ENCODE measurements at regions of chr16 and their contacts with region 1.

Region 1: DNA sequence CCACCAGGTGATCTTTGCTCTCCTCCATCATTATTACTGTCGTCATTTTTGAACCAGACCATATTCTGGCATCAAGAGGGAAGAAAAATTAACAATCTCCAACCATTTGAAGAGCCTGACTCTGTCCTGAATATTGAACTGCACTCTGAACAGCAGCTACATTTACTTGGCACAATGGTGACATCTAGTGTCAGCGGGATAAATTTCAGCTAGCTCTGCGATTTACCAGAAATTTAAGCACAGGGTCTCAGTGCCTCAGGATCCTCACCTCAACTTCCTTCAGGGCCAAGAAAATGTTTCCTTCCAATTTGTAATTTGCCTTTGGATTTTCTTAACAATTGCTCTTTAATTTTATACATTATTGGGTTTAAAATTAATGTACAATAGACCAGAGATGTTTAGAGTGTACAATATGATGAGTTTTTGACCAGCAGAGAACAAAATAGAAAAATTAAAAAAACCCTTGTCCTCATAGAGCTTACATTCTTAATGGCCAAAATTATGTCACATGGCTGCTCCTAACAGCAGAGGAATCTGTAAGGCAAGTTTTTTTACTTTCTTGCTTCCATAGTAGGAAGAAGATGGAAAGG is 10.7 kb upstream of the ZNF19 start:
- DNase-seq: no peak
- H3K4me3 ChIP-seq: no peak overlapping the region
- CTCF ChIP-seq: peak; percentile 63

Region 2: DNA sequence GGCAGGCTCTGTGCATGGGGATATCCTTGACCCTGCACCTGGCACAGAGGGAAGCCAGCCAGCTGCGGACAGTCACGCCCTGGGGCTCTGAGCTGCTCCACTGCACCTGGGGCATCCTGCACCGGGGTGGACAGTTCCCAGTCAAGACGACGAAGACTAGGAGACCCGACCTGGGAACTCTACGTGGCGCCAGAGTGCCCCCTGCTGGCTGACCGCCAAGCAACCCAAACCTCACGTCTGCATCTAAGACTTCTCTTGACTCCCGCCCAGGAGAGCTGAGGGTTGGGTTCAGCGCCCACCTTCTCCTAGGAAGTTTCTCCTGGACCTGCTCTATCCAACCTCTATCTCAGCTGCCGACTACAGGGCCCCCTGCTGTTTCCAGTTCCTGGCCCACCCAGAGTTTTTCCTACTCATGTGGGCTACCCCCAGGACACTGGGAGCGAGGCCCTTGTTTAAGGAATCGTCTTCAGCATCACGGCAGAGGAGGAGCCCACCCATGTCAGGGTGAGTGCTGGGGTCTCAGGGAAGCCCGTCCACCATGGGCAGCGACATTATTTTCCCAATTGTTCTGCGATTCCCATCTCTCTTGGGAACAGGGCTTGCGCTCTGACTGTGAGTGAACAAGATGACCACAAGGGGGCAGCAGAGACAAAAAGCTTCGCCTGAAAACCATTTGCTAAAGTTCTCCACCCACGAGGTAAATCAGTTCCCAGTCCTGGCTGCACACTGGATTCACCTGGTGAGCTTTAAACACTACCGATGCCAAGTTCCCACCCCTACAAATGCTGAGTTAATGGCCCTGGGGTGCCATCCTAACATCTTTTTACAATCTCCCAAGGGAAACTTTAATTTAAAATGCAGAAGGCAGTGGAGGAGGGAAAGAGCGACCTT is 87.4 kb before region 1 on chr16:
- CTCF ChIA-PET with region 1: interaction called, 353 read pairs
- POLR2A ChIA-PET with region 1: no interaction called
- DNase-seq: no peak
- H3K4me3 ChIP-seq: no peak overlapping the region
- CTCF ChIP-seq: peak; percentile 81

Region 3: DNA sequence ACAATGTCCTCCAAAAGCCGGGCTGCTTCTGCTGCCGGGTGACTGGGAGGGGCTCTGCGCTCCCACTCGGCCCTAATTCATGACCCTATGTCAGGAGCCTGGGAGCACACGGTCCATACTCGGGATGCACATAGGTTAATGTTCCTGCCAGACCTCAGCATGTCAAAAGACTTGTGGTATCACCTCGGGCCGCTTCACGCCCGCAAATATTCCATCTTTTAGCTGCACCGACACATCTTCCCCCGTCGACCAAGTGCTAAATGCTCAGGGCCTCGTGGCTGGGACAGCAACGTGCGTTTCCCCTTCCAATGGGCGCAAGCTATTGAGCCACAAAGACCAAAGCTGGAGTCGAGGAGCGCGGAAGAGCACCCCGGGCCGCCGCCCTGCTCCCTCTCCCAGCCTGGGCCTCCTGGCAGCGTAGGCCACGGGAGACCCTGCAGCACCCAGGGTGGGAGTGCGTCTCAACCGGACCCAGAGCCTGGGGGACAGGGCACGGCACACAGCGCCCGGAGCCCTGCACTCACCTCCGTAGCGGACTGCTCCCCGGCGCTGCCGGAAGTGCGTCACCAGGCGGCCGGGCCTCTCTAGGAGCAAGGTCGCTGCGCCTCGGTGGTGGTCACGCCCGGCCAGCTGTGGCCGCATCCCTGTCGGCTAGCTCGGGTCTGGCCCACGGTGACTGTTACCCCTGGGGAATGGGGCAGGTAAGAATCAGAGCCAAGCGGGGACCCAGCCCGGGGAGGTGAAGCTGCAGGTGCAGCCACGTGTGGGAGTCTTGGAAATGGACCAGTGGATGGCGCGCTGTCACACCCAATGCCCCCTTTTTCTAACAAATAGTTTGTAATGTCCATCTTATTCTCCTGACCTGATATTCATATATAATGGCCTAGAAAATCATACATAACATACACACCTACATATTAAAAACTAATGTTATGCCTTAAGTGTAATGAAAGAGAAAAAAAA is 37.9 kb before region 1 on chr16 and contains the start of gene ZNF23:
- CTCF ChIA-PET with region 1: interaction called, 11 read pairs
- POLR2A ChIA-PET with region 1: no interaction called
- DNase-seq: no peak
- H3K4me3 ChIP-seq: peak within 1 kb of the TSS; percentile 98
- CTCF ChIP-seq: no peak

Region 4: GRCh38 chr16:71526111-71526631 is 26.3 kb after region 1 on chr16 and contains the start of gene CHST4:
- CTCF ChIA-PET with region 1: interaction called, 11 read pairs
- POLR2A ChIA-PET with region 1: no interaction called
- DNase-seq: no peak
- H3K4me3 ChIP-seq: peak within 1 kb of the TSS; percentile 12; the same call in 1 of the 2 replicates
- CTCF ChIP-seq: no peak